ENCODE measurements at regions of chr1 and their contacts with region 1.

Region 1: DNA sequence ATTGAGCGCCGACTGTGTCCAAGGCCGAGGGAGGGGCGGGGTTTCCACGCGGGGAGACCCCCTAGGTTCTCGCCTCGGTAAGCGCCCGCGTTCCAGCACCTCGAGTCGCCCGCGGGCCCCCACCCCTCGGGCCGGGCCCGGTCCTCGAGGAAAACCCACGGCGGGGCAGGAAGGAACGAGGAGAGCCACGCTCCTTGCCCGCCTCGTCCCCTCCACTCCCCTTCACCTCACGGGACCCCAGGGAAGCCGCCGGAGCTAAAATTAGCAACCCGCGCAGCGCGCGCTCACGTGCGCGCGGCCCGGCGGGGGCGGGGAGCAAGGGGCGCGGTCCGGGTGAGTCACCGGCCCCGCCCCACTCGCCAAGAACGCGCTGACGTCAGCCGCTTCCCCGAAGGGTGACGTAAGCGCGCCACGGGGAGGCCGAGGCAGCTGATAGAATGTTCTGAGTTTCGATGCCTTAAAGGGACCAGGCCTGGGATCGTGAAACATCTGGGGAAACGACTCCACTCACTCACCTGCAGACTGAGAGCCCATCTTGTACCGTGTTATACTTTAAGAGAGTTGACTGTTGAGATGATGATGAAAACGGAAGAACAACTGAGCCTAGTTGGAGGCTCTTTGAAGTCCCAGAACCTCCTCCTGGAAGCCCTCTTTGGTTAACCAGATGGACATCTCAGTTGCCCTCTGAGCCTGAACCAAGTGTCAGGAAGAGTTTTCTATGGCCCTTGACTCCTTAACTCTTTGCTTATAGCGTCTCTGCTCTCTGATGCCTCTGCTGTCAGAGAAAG is 49.7 kb upstream of the ATF3 start:
- DNase-seq: peak; percentile 85 to 98 (median 90)
- ATAC-seq: peak; percentile 93
- H3K4me3 ChIP-seq: peak overlapping the region; percentile 72
- H3K4me3 Mint-ChIP-seq: peak overlapping the region; percentile 88
- H3K27ac ChIP-seq: peak overlapping the region; percentile 77 to 81
- H3K27ac Mint-ChIP-seq: peak overlapping the region; percentile 85
- H3K4me1 ChIP-seq: peaks cover 16% of the 10 kb centered on the region
- H3K4me1 Mint-ChIP-seq: peaks cover 6% of the 10 kb centered on the region
- H3K27me3 ChIP-seq: no peaks in the 10 kb centered on the region
- H3K27me3 Mint-ChIP-seq: no peaks in the 10 kb centered on the region
- CTCF ChIP-seq: no peak

Region 2: GRCh38 chr1:212035123-212035834 is 523.6 kb before region 1 on chr1 and contains the starts of genes DTL and INTS7:
- CTCF ChIA-PET with region 1: no interaction called
- POLR2A ChIA-PET with region 1: interaction called, 12 read pairs
- intact Hi-C with region 1: loop called in 1 of 2 experiments (anchors 5 kb)
- DNase-seq: peak; percentile 94 to 100 (median 98)
- ATAC-seq: peak; percentile 88
- H3K4me3 ChIP-seq: peak within 1 kb of the TSS; percentile 83
- H3K4me3 Mint-ChIP-seq: peak within 1 kb of the TSS; percentile 95
- H3K27ac ChIP-seq: peak within 1 kb of the TSS; percentile 55 to 77
- H3K27ac Mint-ChIP-seq: peak within 1 kb of the TSS; percentile 95
- H3K4me1 ChIP-seq: peaks cover 16% of the 10 kb centered on the region
- H3K4me1 Mint-ChIP-seq: peaks cover 66% of the 10 kb centered on the region
- H3K27me3 ChIP-seq: no peaks in the 10 kb centered on the region
- H3K27me3 Mint-ChIP-seq: no peaks in the 10 kb centered on the region
- CTCF ChIP-seq: peak; percentile 99
- total RNA-seq, gene DTL: 0.49 to 0.64 TPM
- total RNA-seq, gene INTS7: 2.9 to 3.2 TPM

Region 3: DNA sequence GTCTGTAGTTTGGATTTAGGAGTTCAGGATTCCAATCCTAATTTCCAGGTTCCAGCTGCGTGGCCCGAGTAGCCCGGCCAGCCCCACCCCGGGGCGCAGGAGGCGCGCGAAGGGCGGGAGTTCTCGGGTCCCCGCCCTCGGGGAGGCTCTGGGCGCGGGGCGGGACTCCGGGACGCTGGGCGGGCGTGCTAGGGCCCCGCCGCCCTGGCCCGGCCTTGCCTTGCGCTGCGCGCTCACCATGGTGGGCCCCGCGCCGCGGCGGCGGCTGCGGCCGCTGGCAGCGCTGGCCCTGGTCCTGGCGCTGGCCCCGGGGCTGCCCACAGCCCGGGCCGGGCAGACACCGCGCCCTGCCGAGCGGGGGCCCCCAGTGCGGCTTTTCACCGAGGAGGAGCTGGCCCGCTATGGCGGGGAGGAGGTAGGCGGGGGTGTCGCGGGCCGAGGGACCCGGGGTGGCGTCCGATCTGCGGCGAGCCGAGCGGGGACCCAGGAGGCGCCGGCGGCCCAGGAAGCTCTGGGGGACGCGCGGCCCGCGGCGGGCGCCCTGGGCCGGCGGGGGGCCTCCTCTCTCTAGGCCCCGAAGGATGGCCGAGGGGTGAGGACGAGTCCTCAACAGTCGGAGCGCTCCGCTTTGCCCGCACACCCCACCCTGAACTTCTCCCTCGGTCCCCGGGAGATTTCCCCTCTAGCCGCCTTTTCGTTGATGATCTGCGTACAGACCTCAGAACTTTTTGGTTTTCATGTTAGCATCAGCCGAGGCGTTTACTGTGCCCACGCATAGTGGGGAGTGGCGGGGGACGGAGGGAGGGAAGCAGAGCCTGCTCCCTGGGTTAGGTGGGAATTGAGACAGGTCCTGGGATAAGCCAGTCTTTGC is 125.9 kb before region 1 on chr1 and contains the start of gene NENF:
- CTCF ChIA-PET with region 1: no interaction called
- POLR2A ChIA-PET with region 1: interaction called, 3 read pairs
- intact Hi-C with region 1: loop called in 1 of 2 experiments (anchors 5 kb)
- DNase-seq: peak; percentile 39 to 86 (median 70)
- ATAC-seq: peak; percentile 99
- H3K4me3 ChIP-seq: peak within 1 kb of the TSS; percentile 69
- H3K4me3 Mint-ChIP-seq: peak within 1 kb of the TSS; percentile 87
- H3K27ac ChIP-seq: no peak within 1 kb of the TSS
- H3K27ac Mint-ChIP-seq: peak within 1 kb of the TSS; percentile 65
- H3K4me1 ChIP-seq: peaks cover 20% of the 10 kb centered on the region
- H3K4me1 Mint-ChIP-seq: peaks cover 24% of the 10 kb centered on the region
- H3K27me3 ChIP-seq: no peaks in the 10 kb centered on the region
- H3K27me3 Mint-ChIP-seq: no peaks in the 10 kb centered on the region
- CTCF ChIP-seq: no peak
- total RNA-seq, gene NENF: 21.2 to 22.4 TPM

Region 4: GRCh38 chr1:212447478-212447877 is 111.4 kb before region 1 on chr1:
- CTCF ChIA-PET with region 1: no interaction called
- POLR2A ChIA-PET with region 1: no interaction called
- intact Hi-C with region 1: no loop called
- DNase-seq: no peak
- ATAC-seq: no peak
- H3K4me3 ChIP-seq: no peak overlapping the region
- H3K4me3 Mint-ChIP-seq: no peak overlapping the region
- H3K27ac ChIP-seq: no peak overlapping the region
- H3K27ac Mint-ChIP-seq: no peak overlapping the region
- H3K4me1 ChIP-seq: no peaks in the 10 kb centered on the region
- H3K4me1 Mint-ChIP-seq: no peaks in the 10 kb centered on the region
- H3K27me3 ChIP-seq: no peaks in the 10 kb centered on the region
- H3K27me3 Mint-ChIP-seq: no peaks in the 10 kb centered on the region
- CTCF ChIP-seq: no peak

Region 5: GRCh38 chr1:212608209-212608955 is 49.5 kb after region 1 on chr1 and contains the start of gene ATF3:
- CTCF ChIA-PET with region 1: interaction called, 7 read pairs
- POLR2A ChIA-PET with region 1: interaction called, 15 read pairs
- intact Hi-C with region 1: loop called in 1 of 2 experiments (anchors 2 kb)
- DNase-seq: peak; percentile 49 to 92 (median 69)
- ATAC-seq: peak; percentile 69
- H3K4me3 ChIP-seq: peak within 1 kb of the TSS; percentile 82
- H3K4me3 Mint-ChIP-seq: peak within 1 kb of the TSS; percentile 97
- H3K27ac ChIP-seq: no peak within 1 kb of the TSS
- H3K27ac Mint-ChIP-seq: peak within 1 kb of the TSS; percentile 78
- H3K4me1 ChIP-seq: peaks cover 38% of the 10 kb centered on the region
- H3K4me1 Mint-ChIP-seq: peaks cover 36% of the 10 kb centered on the region
- H3K27me3 ChIP-seq: peaks cover 59% of the 10 kb centered on the region in 2 experiments
- H3K27me3 Mint-ChIP-seq: peaks cover 86% of the 10 kb centered on the region
- CTCF ChIP-seq: no peak
- total RNA-seq, gene ATF3: 10.4 to 12.7 TPM

Region 6: GRCh38 chr1:212857992-212858460 is 299.1 kb after region 1 on chr1 and contains the start of gene FLVCR1:
- CTCF ChIA-PET with region 1: no interaction called
- POLR2A ChIA-PET with region 1: interaction called, 4 read pairs
- intact Hi-C with region 1: loop called in 1 of 2 experiments (anchors 2 kb)
- DNase-seq: peak; percentile 78 to 95 (median 86)
- ATAC-seq: peak; percentile 95
- H3K4me3 ChIP-seq: peak within 1 kb of the TSS; percentile 92
- H3K4me3 Mint-ChIP-seq: peak within 1 kb of the TSS; percentile 72
- H3K27ac ChIP-seq: peak within 1 kb of the TSS; percentile 55 to 63
- H3K27ac Mint-ChIP-seq: peak within 1 kb of the TSS; percentile 89
- H3K4me1 ChIP-seq: peaks cover 33% of the 10 kb centered on the region
- H3K4me1 Mint-ChIP-seq: peaks cover 18% of the 10 kb centered on the region
- H3K27me3 ChIP-seq: no peaks in the 10 kb centered on the region
- H3K27me3 Mint-ChIP-seq: no peaks in the 10 kb centered on the region
- CTCF ChIP-seq: no peak
- total RNA-seq, gene FLVCR1: 8.4 to 9.5 TPM

Measured in CD4-positive, alpha-beta T cell (primary cell).